OCI-LY7 (cell line): ENCODE measurements at regions of chr20 and their contacts with region 1.

Region 1: GRCh38 chr20:1503564-1504227 is 12.5 kb upstream of the SIRPB2 start:
- DNase-seq: peak; percentile 86
- H3K4me3 ChIP-seq: no peak overlapping the region
- H3K27ac ChIP-seq: no peak overlapping the region
- H3K4me1 ChIP-seq: no peaks in the 10 kb centered on the region
- CTCF ChIP-seq: peak; percentile 100

Region 2: GRCh38 chr20:1087311-1087905 is 416.3 kb before region 1 on chr20:
- CTCF ChIA-PET with region 1: no interaction called
- POLR2A ChIA-PET with region 1: no interaction called
- intact Hi-C with region 1: no loop called
- DNase-seq: no peak
- H3K4me3 ChIP-seq: no peak overlapping the region
- H3K27ac ChIP-seq: no peak overlapping the region
- H3K4me1 ChIP-seq: no peaks in the 10 kb centered on the region
- CTCF ChIP-seq: no peak

Region 3: GRCh38 chr20:1313236-1313964 is 190.3 kb before region 1 on chr20:
- CTCF ChIA-PET with region 1: interaction called, 5 read pairs
- POLR2A ChIA-PET with region 1: no interaction called
- intact Hi-C with region 1: loop called (anchors 2 kb)
- DNase-seq: peak; percentile 58
- H3K4me3 ChIP-seq: no peak overlapping the region
- H3K27ac ChIP-seq: no peak overlapping the region
- H3K4me1 ChIP-seq: peaks cover 4% of the 10 kb centered on the region
- CTCF ChIP-seq: peak; percentile 98

Region 4: GRCh38 chr20:1437235-1437904 is 66.3 kb before region 1 on chr20:
- CTCF ChIA-PET with region 1: interaction called, 3 read pairs
- POLR2A ChIA-PET with region 1: no interaction called
- intact Hi-C with region 1: loop called (anchors 2 kb)
- DNase-seq: peak; percentile 80
- H3K4me3 ChIP-seq: no peak overlapping the region
- H3K27ac ChIP-seq: no peak overlapping the region
- H3K4me1 ChIP-seq: peaks cover 19% of the 10 kb centered on the region
- CTCF ChIP-seq: peak; percentile 90

Region 5: GRCh38 chr20:1474825-1475603 is 28.7 kb before region 1 on chr20:
- CTCF ChIA-PET with region 1: interaction called, 6 read pairs
- POLR2A ChIA-PET with region 1: interaction called, 3 read pairs
- intact Hi-C with region 1: loop called (anchors 2 kb)
- DNase-seq: peak; percentile 11
- H3K4me3 ChIP-seq: no peak overlapping the region
- H3K27ac ChIP-seq: no peak overlapping the region
- H3K4me1 ChIP-seq: peaks cover 5% of the 10 kb centered on the region
- CTCF ChIP-seq: peak; percentile 49; the same call in 1 of the 2 replicates

Region 6: DNA sequence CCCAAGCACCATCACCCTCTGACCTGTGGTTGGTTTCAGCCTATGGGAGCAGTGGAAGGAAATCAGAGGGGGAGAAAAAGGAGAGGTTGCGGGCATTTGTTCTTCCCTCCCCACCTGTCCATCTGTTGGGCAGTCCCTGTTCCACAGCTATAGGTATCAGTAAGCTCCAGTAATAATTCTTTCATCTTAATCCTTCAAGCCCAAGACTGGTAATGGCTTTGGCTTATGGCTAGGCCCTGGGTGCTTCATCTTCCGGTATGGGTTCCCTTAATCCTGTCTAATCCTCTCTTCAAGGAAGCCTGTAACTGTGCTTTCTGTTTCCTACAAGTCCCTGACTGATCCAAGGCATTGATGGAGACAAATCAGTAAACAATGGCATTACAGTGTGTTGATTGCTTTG is 555.7 kb after region 1 on chr20:
- CTCF ChIA-PET with region 1: no interaction called
- POLR2A ChIA-PET with region 1: no interaction called
- intact Hi-C with region 1: no loop called
- DNase-seq: no peak
- H3K4me3 ChIP-seq: no peak overlapping the region
- H3K27ac ChIP-seq: no peak overlapping the region
- H3K4me1 ChIP-seq: no peaks in the 10 kb centered on the region
- CTCF ChIP-seq: no peak